ENCODE measurements at regions of chr20 and their contacts with region 1.

Region 1: DNA sequence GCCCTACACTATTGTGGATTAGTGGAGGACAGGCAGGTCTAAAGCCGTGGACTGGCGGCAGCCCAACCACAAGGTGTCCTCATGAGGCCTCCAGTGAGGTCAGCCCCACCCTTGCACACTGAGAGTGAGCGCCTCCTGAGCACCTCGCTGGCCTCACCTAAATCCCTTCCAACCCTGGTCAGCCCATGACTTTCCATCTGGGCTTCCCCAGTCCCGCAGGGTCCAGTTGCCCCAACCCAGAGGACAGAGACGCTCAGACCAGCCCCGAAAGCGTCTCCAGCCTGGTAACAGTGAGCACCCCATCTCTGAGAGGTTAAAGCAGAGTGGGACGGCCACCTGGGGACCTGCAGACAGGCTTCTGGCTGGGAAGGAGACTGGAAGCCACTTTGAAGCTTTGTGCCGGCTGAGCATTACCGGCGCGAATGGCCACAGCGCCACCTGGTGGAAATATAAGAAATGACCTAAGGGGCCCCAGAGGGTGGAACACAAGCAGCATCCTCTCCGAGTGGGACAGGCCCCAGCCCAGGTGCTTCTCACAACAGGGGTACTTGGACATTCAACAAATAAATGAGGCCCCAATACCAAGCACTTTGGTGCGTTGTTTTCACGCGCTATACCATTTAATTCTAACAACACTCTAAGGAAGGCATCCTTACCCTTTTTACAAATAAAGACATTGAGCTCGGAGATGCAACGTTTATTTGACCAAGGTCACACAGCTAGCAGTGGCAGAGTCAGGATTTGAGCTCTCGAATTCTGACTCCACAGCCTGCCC is 65.7 kb upstream of the TOP1 start:
- DNase-seq: peak; percentile 79
- H3K4me3 ChIP-seq: no peak overlapping the region
- H3K27ac ChIP-seq: no peak overlapping the region
- H3K4me1 ChIP-seq: no peaks in the 10 kb centered on the region
- H3K27me3 ChIP-seq: no peaks in the 10 kb centered on the region
- CTCF ChIP-seq: peak; percentile 81

Region 2: DNA sequence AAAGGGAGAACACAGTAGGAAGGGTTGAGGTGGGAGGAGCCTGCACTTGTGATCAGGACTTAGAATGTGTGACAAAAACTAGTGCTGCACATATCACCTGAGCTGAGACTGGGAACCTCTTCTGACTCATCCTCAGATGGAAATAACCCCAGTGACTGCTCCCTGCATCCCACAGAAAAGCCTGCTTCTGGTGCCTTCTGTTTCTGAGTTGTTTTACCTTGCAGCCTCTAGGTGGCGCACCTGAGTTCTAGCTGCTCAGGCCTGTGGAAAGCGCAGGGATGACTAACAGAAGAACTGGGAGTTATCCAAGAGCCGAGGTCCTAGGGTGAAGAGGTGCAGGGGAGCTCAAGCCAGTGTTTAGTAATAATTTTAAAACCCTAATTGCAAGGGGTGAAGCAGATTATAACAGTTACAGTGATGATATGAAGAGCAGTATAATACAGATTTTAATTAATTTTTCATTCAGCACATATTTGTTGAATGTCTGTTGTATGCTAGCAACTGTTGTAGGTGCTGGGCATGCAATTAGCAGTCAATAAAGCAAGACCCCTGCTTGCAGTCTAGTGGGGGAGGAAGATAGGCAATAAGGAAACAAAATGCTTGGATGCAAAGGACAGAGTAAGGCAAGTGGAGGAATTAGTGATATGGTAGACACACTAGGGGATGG is 1698.3 kb before region 1 on chr20:
- CTCF ChIA-PET with region 1: no interaction called
- POLR2A ChIA-PET with region 1: no interaction called
- intact Hi-C with region 1: loop called (anchors 5 kb)
- DNase-seq: peak; percentile 71
- H3K4me3 ChIP-seq: no peak overlapping the region
- H3K27ac ChIP-seq: no peak overlapping the region
- H3K4me1 ChIP-seq: no peaks in the 10 kb centered on the region
- H3K27me3 ChIP-seq: no peaks in the 10 kb centered on the region
- CTCF ChIP-seq: peak; percentile 94

Region 3: GRCh38 chr20:40797425-40797824 is 165.5 kb before region 1 on chr20:
- CTCF ChIA-PET with region 1: interaction called, 6 read pairs
- POLR2A ChIA-PET with region 1: interaction called, 3 read pairs
- intact Hi-C with region 1: loop called (anchors 5 kb)
- DNase-seq: peak; percentile 19
- H3K4me3 ChIP-seq: no peak overlapping the region
- H3K27ac ChIP-seq: no peak overlapping the region
- H3K4me1 ChIP-seq: no peaks in the 10 kb centered on the region
- H3K27me3 ChIP-seq: peaks cover 71% of the 10 kb centered on the region
- CTCF ChIP-seq: peak; percentile 62

Region 4: DNA sequence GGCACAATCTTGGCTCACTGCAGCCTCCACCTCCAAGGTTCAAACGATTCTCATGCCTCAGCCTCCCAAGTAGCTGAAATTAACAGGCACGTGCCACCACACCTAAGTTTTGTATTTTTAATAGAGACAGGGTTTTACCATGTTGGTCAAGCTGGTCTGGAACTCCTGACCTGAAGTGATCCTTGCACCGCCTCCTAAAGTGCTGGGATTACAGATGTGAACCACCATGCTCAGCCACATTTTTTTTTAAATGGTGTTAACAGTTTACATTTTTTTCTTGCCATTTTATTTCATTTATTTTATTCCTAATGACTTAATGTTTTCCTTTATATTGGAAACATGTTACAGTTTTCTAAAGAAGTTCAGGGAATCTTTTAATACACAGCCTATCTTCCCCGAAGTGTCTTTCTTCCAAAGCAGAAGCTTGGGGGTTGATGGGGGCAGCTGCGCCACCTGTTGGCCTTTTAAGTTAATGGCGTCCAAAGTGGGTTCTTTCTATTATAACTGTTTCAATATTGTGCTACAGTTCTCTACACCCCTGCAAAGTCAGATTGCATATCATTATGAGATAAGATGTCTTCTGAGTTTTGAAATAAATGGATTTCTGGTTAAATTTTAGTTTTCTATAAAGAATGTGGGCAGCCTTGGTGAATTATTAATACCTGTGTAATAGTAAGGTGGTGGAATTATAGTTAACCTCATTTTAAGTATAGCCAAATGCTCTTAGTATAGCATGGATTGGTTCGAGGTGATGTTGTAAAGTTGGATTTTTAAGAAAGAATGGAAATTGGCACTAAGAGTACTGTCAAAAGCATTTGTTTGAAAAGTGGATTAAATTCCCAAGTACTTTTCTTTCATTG is 132.4 kb after region 1 on chr20:
- CTCF ChIA-PET with region 1: interaction called, 19 read pairs
- POLR2A ChIA-PET with region 1: no interaction called
- intact Hi-C with region 1: loop called (anchors 1 kb)
- DNase-seq: peak; percentile 73
- H3K4me3 ChIP-seq: no peak overlapping the region
- H3K27ac ChIP-seq: no peak overlapping the region
- H3K4me1 ChIP-seq: peaks cover 6% of the 10 kb centered on the region
- H3K27me3 ChIP-seq: no peaks in the 10 kb centered on the region
- CTCF ChIP-seq: peak; percentile 92

Region 5: GRCh38 chr20:41339507-41340326 is 376.8 kb after region 1 on chr20:
- CTCF ChIA-PET with region 1: interaction called, 3 read pairs
- POLR2A ChIA-PET with region 1: no interaction called
- intact Hi-C with region 1: loop called (anchors 1 kb)
- DNase-seq: peak; percentile 70
- H3K4me3 ChIP-seq: peak overlapping the region; percentile 41
- H3K27ac ChIP-seq: no peak overlapping the region
- H3K4me1 ChIP-seq: peaks cover 5% of the 10 kb centered on the region
- H3K27me3 ChIP-seq: no peaks in the 10 kb centered on the region
- CTCF ChIP-seq: peak; percentile 98

Measured in A673 (cell line).